Calu3 (cell line): ENCODE measurements at regions of chr14 and their contacts with region 1.

Region 1: GRCh38 chr14:22432348-22432976 is 156.6 kb downstream of the DAD1 start:
- DNase-seq: peak; percentile 65
- H3K4me3 Mint-ChIP-seq: peak overlapping the region; percentile 38
- H3K27ac Mint-ChIP-seq: peak overlapping the region; percentile 88
- H3K4me1 Mint-ChIP-seq: peaks cover 39% of the 10 kb centered on the region
- H3K27me3 Mint-ChIP-seq: no peaks in the 10 kb centered on the region
- CTCF ChIP-seq: no peak

Region 2: DNA sequence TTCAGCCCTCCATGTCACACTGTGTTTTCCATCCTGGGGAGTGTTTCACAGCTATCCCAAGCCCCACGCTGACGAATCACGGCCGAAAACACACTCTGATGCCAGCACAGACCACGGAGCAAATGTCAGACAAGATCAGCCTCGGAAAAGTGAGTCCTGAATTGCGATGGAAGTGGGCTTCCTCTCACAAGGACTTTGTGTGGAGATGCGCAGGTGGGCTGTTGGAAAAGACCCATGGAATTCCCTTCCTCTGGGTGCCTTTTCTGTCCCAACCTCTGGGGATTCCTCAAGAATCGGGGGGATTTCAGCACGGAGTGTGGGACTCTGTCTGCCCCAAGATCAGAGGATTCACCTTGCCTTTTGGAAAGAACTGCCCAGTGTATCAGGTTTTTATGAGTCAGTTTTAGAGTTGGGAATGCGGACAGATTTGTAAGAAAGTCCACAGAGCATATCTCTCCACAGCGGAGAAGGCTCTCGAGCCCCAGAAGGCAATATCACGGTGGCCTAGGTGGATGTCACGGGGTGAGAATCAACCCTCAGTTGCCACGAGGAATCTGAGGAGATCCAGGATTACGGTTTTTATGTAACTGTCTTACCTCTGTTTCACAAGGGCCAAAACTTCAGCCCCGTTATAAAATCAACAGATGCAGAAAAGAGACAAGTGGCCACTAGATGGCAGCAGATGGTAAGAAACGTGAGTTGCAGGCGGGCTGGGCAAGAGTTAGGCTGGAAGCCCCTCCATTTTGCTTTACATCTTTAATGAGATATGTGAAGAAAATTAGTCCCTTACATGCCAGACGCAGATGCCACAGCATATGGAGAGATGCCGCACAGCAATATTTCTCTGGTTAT is 45.3 kb before region 1 on chr14:
- CTCF ChIA-PET with region 1: interaction called, 3 read pairs
- intact Hi-C with region 1: loop called (anchors 5 kb)
- DNase-seq: peak; percentile 74
- H3K4me3 Mint-ChIP-seq: no peak overlapping the region
- H3K27ac Mint-ChIP-seq: no peak overlapping the region
- H3K4me1 Mint-ChIP-seq: peaks cover 55% of the 10 kb centered on the region
- H3K27me3 Mint-ChIP-seq: no peaks in the 10 kb centered on the region
- CTCF ChIP-seq: peak; percentile 60